Motor neuron (in vitro differentiated cells): ENCODE measurements at regions of chr1 and their contacts with region 1.

Region 1: GRCh38 chr1:110460253-110461220 is 9.6 kb downstream of the PROK1 start:
- ATAC-seq: peak; percentile 89 to 96 (median 90)
- H3K4me3 ChIP-seq: no peak overlapping the region
- H3K27ac ChIP-seq: no peak overlapping the region
- H3K4me1 ChIP-seq: peaks cover 0 to 3% of the 10 kb centered on the region in 2 donors

Region 2: DNA sequence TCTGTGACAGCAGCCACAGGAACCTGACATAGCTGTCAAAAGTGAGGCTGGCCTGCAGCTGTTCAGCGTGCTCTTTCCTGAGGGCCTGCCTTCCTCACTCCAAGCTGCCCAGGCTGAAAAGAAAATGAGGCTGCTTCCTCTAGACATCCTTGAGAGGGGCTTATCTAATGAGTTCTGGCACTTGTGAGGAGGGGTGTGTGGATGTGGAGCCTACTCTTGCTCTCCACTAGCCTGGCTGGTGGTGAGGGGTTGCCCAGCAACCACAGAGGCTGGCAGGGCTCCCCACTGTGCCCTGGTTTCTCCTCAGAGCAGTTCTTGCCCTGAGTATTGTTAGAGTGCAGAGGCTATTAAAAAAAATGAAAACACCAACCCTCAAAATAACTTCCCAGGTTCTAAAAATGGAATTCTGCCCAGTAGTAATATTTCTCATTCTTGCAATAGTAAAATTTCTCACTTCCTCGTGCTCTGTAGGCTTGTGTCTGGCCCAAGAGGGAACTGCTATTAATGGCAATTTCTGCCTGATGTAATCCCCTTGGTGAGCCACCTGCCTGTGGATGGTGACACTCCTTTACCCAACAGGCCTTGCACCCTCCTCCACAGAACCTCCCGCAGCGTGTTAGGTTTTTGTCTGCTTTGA is 644.2 kb before region 1 on chr1:
- in situ Hi-C with region 1: no loop called
- ATAC-seq: peak in 3 of 8 experiments; percentile 40 to 66 (median 54)
- H3K4me3 ChIP-seq: no peak overlapping the region
- H3K27ac ChIP-seq: no peak overlapping the region
- H3K4me1 ChIP-seq: no peaks in the 10 kb centered on the region

Region 3: GRCh38 chr1:110034451-110035235 is 425.9 kb before region 1 on chr1 and contains the start of gene STRIP1:
- in situ Hi-C with region 1: loop called in 2 of 9 experiments (anchors 25 kb)
- ATAC-seq: peak; percentile 79 to 88 (median 86)
- H3K4me3 ChIP-seq: peak within 1 kb of the TSS; percentile 91 to 99 (median 96)
- H3K27ac ChIP-seq: peak within 1 kb of the TSS; percentile 96 to 98
- H3K4me1 ChIP-seq: peaks cover 26 to 38% of the 10 kb centered on the region in 2 donors
- total RNA-seq, gene STRIP1: 29.7 to 98.3 (median 60.3) TPM

Region 4: GRCh38 chr1:110053557-110054428 is 406.7 kb before region 1 on chr1:
- in situ Hi-C with region 1: loop called in 3 of 9 experiments (anchors 25 kb)
- ATAC-seq: peak in 6 of 8 experiments; percentile 69 to 91 (median 78)
- H3K4me3 ChIP-seq: no peak overlapping the region
- H3K27ac ChIP-seq: no peak overlapping the region
- H3K4me1 ChIP-seq: peaks cover 12 to 14% of the 10 kb centered on the region in 2 donors

Region 5: DNA sequence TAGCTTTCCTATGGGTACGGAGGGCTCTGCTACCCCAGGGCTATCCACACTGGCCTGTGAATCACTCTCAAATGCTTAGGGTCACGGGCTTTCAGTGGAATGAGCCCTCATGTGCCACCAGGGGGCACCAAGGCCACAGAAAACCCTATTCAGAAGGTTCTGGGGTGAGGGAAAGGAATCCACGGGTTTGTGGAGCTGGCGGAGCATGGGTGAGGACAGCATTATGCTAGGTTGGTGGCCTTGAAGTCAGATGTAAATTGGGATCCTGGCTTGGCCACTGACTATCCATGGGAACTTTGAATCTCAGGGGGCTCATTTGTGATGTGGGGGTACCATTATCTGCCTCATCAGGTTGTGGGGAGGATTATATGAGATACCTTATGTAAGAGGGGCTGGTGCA is 48.0 kb before region 1 on chr1:
- in situ Hi-C with region 1: loop called in 1 of 9 experiments (anchors 10 kb)
- ATAC-seq: peak; percentile 50 to 77 (median 60)
- H3K4me3 ChIP-seq: no peak overlapping the region
- H3K27ac ChIP-seq: no peak overlapping the region
- H3K4me1 ChIP-seq: peaks cover 3 to 20% of the 10 kb centered on the region in 2 donors